B cell (primary cell): ENCODE measurements at regions of chr1 and their contacts with region 1.

Region 1: DNA sequence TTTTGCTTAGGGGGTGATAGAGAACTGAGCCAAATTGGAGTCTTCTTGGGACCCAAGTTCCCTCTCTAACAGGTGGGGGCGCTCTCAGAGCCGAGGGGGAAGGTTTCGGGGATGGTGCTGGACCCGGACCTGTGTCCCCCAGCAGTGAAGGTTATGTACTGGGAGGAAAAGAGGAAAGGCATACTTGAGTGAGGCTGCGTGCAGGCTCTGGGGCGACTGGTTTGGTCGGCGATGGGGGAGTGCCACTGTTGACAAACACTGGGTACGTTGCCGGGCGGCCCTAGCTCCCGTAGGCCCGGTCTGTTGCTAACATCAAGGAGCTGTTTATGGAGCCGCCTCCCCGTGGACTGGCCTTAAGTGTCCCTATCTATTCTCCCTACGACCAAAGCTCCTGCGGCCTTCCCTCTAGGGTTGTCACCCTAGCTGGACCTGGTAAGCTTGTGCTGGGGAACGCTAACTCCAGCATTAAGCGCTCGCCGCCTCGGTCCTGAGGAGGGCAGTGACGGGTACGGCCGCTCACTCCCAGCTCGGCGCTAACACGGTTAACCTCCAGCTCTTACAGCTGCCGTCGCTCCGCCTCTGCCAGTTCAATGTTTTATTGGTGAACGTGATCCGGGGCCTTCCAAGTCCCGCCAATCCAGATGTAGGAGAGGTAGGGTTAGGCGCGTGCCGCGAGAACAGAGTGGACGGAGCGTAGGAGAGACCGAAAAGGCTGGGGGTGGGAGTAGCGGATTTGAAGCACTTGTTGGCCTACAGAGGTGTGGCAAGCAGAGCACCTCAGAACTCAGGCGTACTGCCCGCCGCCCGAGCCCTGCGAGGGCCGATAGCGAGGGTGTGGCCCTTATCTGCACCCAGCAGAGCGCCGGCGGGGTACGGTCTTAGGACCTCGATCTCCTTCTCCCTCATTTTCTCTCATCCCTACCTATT is at the start of gene PPOX:
- DNase-seq: peak; percentile 95
- ATAC-seq: peak; percentile 94
- H3K4me3 ChIP-seq: peak within 1 kb of the TSS; percentile 48 to 82 (median 69)
- H3K4me3 Mint-ChIP-seq: peak within 1 kb of the TSS; percentile 91
- H3K27ac ChIP-seq: peak within 1 kb of the TSS; percentile 89 to 92
- H3K27ac Mint-ChIP-seq: peak within 1 kb of the TSS; percentile 99
- H3K4me1 ChIP-seq: peaks cover 20 to 26% of the 10 kb centered on the region in 2 donors
- H3K4me1 Mint-ChIP-seq: peaks cover 47% of the 10 kb centered on the region
- H3K27me3 ChIP-seq: no peaks in the 10 kb centered on the region
- H3K27me3 Mint-ChIP-seq: no peaks in the 10 kb centered on the region
- CTCF ChIP-seq: peak; percentile 68
- total RNA-seq, gene PPOX: 61.7 and 65.6 TPM in 2 replicates

Region 2: DNA sequence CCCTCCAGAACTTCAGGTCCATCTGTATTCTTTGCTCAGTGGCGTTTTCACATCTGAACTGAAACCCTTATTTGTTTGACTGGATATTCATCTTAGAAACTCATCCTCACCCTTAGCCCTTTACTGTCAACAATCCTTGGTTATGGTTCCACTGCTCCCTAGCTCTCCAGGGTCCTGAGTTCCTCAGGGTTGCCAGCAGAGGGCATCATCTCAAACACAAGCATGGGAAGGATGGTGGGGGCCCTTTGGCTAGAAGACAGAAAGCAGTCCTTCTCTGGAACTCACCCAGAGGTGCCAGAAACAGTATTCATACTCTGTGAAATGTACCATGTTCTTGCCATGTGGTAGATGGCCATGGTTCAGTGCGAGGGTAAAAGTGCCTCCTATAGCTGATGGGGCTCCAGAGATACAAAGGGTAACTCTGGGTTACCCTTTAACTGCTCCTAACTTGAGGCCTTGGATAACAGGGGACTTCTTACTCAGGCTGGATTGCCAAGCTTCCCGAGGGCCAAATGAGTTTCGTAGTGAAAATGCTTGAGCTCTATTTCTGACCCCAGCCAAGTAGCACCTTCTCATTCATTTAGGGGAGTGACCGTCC is 811.5 kb before region 1 on chr1:
- CTCF ChIA-PET with region 1: no interaction called
- POLR2A ChIA-PET with region 1: no interaction called
- intact Hi-C with region 1: no loop called
- DNase-seq: peak; percentile 36
- ATAC-seq: peak; percentile 43
- H3K4me3 ChIP-seq: no peak overlapping the region
- H3K4me3 Mint-ChIP-seq: no peak overlapping the region
- H3K27ac ChIP-seq: no peak overlapping the region
- H3K27ac Mint-ChIP-seq: no peak overlapping the region
- H3K4me1 ChIP-seq: no peaks in the 10 kb centered on the region
- H3K4me1 Mint-ChIP-seq: no peaks in the 10 kb centered on the region
- H3K27me3 ChIP-seq: no peaks in the 10 kb centered on the region
- H3K27me3 Mint-ChIP-seq: no peaks in the 10 kb centered on the region
- CTCF ChIP-seq: peak; percentile 48

Region 3: DNA sequence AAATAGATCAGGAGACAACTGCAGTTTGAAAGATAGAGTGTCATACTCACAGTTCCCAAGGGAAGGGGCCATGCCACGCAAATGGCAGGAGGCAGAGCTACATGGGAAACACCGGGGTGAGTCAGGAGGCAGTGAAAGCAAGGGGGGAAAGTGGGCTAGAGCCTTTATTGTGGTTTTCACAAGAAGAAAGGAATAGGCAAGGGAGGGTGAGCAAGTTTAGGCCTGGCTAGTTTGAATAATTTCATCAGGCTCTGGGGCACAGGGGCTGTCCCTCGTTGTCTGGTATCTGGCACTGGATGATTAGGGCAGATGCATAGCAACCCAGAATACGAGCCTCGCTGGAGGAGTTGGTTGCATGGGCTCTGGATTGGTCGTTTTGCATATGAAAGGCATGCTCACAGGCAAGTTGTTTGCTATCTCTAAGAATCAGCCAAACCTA is 194.4 kb before region 1 on chr1:
- CTCF ChIA-PET with region 1: no interaction called
- POLR2A ChIA-PET with region 1: no interaction called
- intact Hi-C with region 1: no loop called
- DNase-seq: no peak
- ATAC-seq: peak; percentile 33
- H3K4me3 ChIP-seq: no peak overlapping the region
- H3K4me3 Mint-ChIP-seq: no peak overlapping the region
- H3K27ac ChIP-seq: no peak overlapping the region
- H3K27ac Mint-ChIP-seq: no peak overlapping the region
- H3K4me1 ChIP-seq: no peaks in the 10 kb centered on the region
- H3K4me1 Mint-ChIP-seq: no peaks in the 10 kb centered on the region
- H3K27me3 ChIP-seq: peaks cover 0 to 3% (median 0%) of the 10 kb centered on the region in 4 experiments
- H3K27me3 Mint-ChIP-seq: peaks cover 15% of the 10 kb centered on the region
- CTCF ChIP-seq: no peak

Region 4: DNA sequence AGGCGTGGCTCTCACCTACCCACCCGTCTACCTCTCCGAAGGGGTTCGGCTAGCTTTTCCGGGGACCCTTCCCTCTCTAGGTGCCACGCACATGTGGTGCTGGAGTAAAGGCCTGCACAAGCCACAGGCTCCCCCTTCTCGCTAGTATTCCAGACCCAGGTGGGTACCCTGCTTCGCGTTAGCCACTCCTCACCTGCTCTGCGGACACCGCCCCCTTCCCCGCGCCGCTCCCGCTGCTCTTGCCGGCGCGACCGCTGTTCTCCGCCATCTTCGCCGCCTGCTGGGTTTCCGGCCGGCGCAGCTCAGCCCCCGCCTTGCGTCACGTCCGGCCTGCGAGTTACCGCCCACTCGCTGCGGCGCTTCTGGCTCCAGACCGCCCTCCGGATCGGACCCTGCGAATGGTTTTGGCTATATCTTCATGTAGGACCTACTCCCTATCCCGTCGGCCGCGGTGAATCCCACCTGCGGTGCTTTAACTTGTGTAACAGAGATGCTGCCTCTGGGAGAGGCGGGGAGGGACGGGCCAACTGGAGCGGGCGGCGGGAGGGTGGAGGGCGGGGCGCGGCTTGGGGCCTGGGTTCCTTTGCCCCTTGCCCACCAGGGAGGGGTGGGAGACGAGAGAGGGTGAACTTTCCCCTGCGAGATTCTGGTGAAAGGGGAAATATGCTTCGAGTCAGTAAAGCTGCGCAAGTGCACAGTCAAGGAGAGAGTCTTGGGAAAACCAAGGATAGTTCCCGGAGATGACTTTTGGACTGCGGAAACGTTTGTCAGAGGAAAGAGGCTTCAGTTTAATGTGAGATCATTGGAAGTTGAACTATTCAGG is 48.0 kb before region 1 on chr1 and contains the starts of genes NIT1 and PFDN2:
- CTCF ChIA-PET with region 1: interaction called, 4 read pairs
- POLR2A ChIA-PET with region 1: no interaction called
- intact Hi-C with region 1: loop called (anchors 2 kb)
- DNase-seq: peak; percentile 90
- ATAC-seq: peak; percentile 84
- H3K4me3 ChIP-seq: peak within 1 kb of the TSS; percentile 71 to 98 (median 97)
- H3K4me3 Mint-ChIP-seq: peak within 1 kb of the TSS; percentile 97
- H3K27ac ChIP-seq: peak within 1 kb of the TSS; percentile 86 to 89
- H3K27ac Mint-ChIP-seq: peak within 1 kb of the TSS; percentile 94
- H3K4me1 ChIP-seq: peaks cover 45 to 54% of the 10 kb centered on the region in 2 donors
- H3K4me1 Mint-ChIP-seq: peaks cover 78% of the 10 kb centered on the region
- H3K27me3 ChIP-seq: no peaks in the 10 kb centered on the region
- H3K27me3 Mint-ChIP-seq: no peaks in the 10 kb centered on the region
- CTCF ChIP-seq: no peak
- total RNA-seq, gene NIT1: 53.5 and 56.1 TPM in 2 replicates
- total RNA-seq, gene PFDN2: 29.9 and 32.3 TPM in 2 replicates

Region 5: GRCh38 chr1:161177112-161177935 is 11.3 kb after region 1 on chr1 and contains the start of gene B4GALT3:
- CTCF ChIA-PET with region 1: interaction called, 24 read pairs
- POLR2A ChIA-PET with region 1: interaction called, 10 read pairs
- intact Hi-C with region 1: loop called (anchors 1 kb)
- DNase-seq: peak; percentile 92
- ATAC-seq: peak; percentile 92
- H3K4me3 ChIP-seq: peak within 1 kb of the TSS; percentile 75 to 95 (median 90)
- H3K4me3 Mint-ChIP-seq: peak within 1 kb of the TSS; percentile 99
- H3K27ac ChIP-seq: peak within 1 kb of the TSS; percentile 76 to 81
- H3K27ac Mint-ChIP-seq: peak within 1 kb of the TSS; percentile 100
- H3K4me1 ChIP-seq: peaks cover 36 to 52% of the 10 kb centered on the region in 2 donors
- H3K4me1 Mint-ChIP-seq: peaks cover 64% of the 10 kb centered on the region
- H3K27me3 ChIP-seq: no peaks in the 10 kb centered on the region
- H3K27me3 Mint-ChIP-seq: no peaks in the 10 kb centered on the region
- CTCF ChIP-seq: no peak
- total RNA-seq, gene B4GALT3: 37.6 and 42.9 TPM in 2 replicates

Region 6: DNA sequence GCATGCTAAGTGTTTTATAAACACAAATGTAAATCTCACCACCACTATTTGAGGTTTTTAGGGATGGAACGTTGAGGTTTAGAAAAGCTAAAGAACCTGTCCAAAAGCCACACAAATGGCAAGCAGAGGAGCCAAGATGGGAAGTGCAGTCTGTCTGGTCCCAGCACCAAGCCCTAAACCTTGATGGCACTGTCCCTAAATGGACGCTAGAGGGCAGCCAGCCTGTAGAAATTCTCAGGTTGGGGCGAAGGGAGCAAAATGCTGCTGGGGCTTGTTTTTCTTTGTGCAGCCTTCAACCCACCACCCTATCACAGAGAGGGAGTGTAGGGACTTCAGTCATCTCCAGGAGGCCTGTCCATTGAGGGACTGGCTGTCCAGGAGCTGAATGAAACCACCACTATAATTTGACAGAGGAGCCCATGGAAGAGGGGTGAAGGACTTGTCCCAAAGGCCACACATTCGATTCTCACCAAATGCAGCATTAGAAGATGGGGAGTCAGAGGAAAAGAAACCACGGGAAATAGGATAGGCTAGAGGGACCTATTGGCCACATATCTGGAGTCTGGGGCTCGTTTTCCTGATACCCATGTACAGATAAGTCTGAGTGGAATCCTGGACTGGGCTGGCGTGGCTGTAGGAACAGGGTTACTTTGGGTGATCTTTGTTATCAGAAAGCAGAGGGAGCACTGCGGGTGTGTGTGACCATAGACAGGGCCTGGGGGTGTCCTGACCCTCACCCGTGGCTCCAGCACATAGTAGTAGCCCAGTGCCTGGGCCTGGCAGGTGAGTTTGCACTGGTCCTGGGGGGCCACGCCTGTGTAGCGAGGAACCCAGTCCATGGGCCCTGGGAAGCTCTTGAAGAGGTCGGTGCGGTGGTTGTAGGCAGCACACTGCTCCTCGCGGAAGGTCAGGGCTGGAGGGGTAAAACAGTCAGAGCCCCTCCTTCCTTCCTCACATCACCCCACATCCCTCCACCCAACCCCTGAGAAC is 26.8 kb after region 1 on chr1:
- CTCF ChIA-PET with region 1: interaction called, 29 read pairs
- POLR2A ChIA-PET with region 1: interaction called, 3 read pairs
- intact Hi-C with region 1: loop called (anchors 1 kb)
- DNase-seq: peak; percentile 83
- ATAC-seq: peak; percentile 91
- H3K4me3 ChIP-seq: no peak overlapping the region
- H3K4me3 Mint-ChIP-seq: no peak overlapping the region
- H3K27ac ChIP-seq: no peak overlapping the region
- H3K27ac Mint-ChIP-seq: peak overlapping the region; percentile 72
- H3K4me1 ChIP-seq: peaks cover 56 to 71% of the 10 kb centered on the region in 2 donors
- H3K4me1 Mint-ChIP-seq: peaks cover 56% of the 10 kb centered on the region
- H3K27me3 ChIP-seq: no peaks in the 10 kb centered on the region
- H3K27me3 Mint-ChIP-seq: no peaks in the 10 kb centered on the region
- CTCF ChIP-seq: peak; percentile 92

Region 7: DNA sequence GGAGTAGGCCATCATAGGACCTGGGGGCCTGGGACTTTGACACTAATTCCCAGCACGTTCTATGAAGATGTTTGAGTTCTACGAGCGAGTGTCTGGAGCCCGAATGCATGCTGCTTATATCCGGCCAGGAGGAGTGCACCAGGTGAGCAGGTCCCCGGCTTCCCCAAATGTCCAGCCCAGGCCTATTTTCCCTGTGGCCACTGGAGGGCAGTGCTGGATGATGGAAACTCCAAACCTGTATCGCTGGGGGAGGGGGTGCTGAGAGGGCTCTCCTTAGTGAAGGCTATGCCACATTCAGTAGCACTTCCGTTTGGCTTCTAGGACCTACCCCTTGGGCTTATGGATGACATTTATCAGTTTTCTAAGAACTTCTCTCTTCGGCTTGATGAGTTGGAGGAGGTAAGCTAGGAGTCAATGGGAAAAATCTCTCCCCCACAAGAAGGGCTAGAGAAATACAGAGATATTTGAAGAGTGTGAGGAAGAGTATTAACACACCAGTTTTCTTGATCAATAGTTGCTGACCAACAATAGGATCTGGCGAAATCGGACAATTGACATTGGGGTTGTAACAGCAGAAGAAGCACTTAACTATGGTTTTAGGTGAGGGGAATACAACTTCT is 43.9 kb after region 1 on chr1:
- CTCF ChIA-PET with region 1: interaction called, 10 read pairs
- POLR2A ChIA-PET with region 1: no interaction called
- intact Hi-C with region 1: no loop called
- DNase-seq: peak; percentile 81
- ATAC-seq: peak; percentile 99
- H3K4me3 ChIP-seq: no peak overlapping the region
- H3K4me3 Mint-ChIP-seq: no peak overlapping the region
- H3K27ac ChIP-seq: no peak overlapping the region
- H3K27ac Mint-ChIP-seq: no peak overlapping the region
- H3K4me1 ChIP-seq: peaks cover under 1% of the 10 kb centered on the region in 2 donors
- H3K4me1 Mint-ChIP-seq: peaks cover 3% of the 10 kb centered on the region
- H3K27me3 ChIP-seq: peaks cover 0 to under 1% (median under 1%) of the 10 kb centered on the region in 4 experiments
- H3K27me3 Mint-ChIP-seq: peaks cover 4% of the 10 kb centered on the region
- CTCF ChIP-seq: peak; percentile 74